PC-3 (cell line): ENCODE measurements at regions of chr2 and their contacts with region 1.

Region 1: DNA sequence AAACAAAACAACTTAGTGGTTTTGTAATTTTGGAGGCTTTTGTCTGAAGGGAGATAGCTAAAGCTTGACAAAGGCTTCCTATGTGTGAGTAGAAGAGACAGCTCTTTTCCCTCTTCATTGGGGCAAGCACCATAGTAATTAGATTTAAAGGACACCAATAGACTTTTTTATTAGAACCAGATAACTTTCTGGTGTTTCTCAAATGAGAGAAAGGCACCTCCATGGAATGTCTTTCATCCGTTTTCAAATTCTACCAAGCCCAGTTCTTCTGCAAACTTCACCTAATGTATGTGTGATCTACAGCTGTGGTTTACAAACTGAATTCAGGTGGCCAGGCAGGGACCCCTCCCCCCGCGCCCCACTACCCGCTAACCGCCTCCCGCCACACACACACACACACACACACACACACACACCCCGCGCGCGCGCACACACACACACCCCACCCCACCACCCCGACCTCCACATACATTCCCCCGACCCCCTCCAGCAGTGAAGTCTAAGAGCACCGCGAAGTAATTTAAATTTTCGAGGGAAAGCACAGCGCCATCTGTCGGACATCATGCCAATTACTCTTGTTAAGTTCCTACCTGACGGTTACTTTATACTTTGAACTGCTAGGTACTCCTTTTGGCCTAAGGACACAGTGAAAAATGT is 31.6 kb upstream of the PPP1R1C start:
- DNase-seq: peak; percentile 83
- ATAC-seq: peak; percentile 42
- H3K4me3 ChIP-seq: peak overlapping the region; percentile 45
- H3K27ac ChIP-seq: peak overlapping the region; percentile 57
- H3K4me1 ChIP-seq: peaks cover 35% of the 10 kb centered on the region
- H3K27me3 ChIP-seq: no peaks in the 10 kb centered on the region
- CTCF ChIP-seq: peak; percentile 79

Region 2: DNA sequence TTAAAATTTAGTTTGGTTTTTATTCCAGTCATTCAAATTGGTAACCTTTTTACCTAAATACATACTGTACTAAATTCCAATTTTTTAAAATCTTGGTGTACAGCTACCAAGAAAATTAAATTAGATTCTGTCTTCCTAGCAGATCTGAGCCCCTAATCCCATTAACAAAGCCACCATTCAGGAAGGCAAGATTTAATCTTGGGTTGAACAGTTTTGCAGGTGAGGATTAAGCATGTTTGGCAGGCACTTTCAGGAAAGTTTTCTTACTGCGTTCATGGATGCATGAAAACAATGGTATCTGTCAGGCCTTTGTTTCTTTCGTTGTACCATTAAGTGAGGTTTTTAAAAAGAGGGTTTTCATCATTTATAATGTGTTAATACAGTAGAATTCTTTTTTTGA is 29.7 kb before region 1 on chr2:
- CTCF ChIA-PET with region 1: no interaction called
- POLR2A ChIA-PET with region 1: no interaction called
- intact Hi-C with region 1: no loop called
- DNase-seq: no peak
- ATAC-seq: no peak
- H3K4me3 ChIP-seq: no peak overlapping the region
- H3K27ac ChIP-seq: no peak overlapping the region
- H3K4me1 ChIP-seq: no peaks in the 10 kb centered on the region
- H3K27me3 ChIP-seq: no peaks in the 10 kb centered on the region
- CTCF ChIP-seq: no peak

Region 3: GRCh38 chr2:181970160-181970794 is 16.3 kb after region 1 on chr2:
- CTCF ChIA-PET with region 1: interaction called, 12 read pairs
- POLR2A ChIA-PET with region 1: no interaction called
- intact Hi-C with region 1: no loop called
- DNase-seq: no peak
- ATAC-seq: no peak
- H3K4me3 ChIP-seq: no peak overlapping the region
- H3K27ac ChIP-seq: no peak overlapping the region
- H3K4me1 ChIP-seq: peaks cover 7% of the 10 kb centered on the region; the same call in 1 of the 2 replicates
- H3K27me3 ChIP-seq: no peaks in the 10 kb centered on the region
- CTCF ChIP-seq: no peak

Region 4: DNA sequence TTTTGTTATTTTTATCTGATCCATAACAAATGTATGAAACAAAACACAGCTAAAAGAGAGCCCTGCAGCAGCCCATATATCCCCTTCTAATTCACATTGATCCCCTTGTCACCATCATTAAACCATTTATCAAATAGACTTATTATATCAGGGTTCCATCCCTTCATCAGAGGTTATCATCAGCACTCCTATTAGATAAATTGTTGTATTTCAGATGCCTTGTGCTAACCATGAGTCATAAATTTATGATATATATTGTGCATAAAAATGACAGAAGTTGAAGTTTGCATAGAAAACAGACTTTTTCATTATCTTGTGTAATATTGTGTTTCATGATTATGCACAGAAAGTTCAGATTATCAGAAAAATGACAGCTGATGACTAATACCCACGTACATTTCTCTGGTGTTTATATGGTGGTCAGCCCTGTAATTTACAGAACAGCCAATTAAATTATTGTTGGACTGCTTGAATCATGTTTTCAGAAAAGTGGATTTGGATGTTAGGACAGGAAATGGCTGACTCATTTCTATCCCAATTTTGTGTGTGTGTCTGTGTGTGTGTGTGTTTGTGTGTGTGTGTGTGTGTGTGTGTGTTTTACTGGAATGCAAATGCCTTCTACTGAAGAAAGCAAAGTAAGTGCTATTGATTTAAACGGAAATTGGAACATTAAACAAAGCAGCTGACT is 112.5 kb after region 1 on chr2:
- CTCF ChIA-PET with region 1: no interaction called
- POLR2A ChIA-PET with region 1: interaction called, 5 read pairs
- intact Hi-C with region 1: loop called (anchors 2 kb)
- DNase-seq: peak; percentile 88
- ATAC-seq: peak; percentile 85
- H3K4me3 ChIP-seq: no peak overlapping the region
- H3K27ac ChIP-seq: peak overlapping the region; percentile 36
- H3K4me1 ChIP-seq: peaks cover 34% of the 10 kb centered on the region
- H3K27me3 ChIP-seq: no peaks in the 10 kb centered on the region
- CTCF ChIP-seq: no peak

Region 5: DNA sequence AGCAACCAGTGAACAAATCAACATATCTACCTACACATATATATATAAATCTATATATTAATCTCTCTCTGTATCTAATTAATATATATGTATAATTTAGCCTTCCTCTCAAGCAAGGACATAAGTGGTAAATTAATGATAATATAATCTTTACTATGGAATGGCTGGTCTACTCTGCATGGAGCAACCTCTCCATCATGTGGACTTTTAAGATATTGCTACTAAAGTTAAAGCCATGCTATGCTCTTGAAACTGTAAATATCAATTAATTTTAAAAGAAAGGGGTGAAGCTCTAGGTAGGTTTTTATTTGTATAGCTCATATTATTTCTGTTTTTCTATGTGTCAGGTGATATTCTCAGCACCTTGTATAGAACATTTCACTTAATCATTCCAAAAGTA is 178.6 kb after region 1 on chr2:
- CTCF ChIA-PET with region 1: no interaction called
- POLR2A ChIA-PET with region 1: no interaction called
- intact Hi-C with region 1: loop called (anchors 5 kb)
- DNase-seq: peak; percentile 29
- ATAC-seq: peak; percentile 71
- H3K4me3 ChIP-seq: no peak overlapping the region
- H3K27ac ChIP-seq: no peak overlapping the region
- H3K4me1 ChIP-seq: peaks cover 11% of the 10 kb centered on the region
- H3K27me3 ChIP-seq: no peaks in the 10 kb centered on the region
- CTCF ChIP-seq: peak; percentile 54